Dorsolateral prefrontal cortex (tissue), 120 donors: ENCODE measurements at regions of chr4 and their contacts with region 1.

Region 1: GRCh38 chr4:143482840-143483239 is 30.7 kb upstream of the SMARCA5 start:
- DNase-seq: peak in 2 of 10 donors; percentile 9 to 26
- H3K4me3 ChIP-seq: no peak overlapping the region
- H3K27ac ChIP-seq: peak overlapping the region in 47 of 59 donors; percentile 0 to 85 (median 64)
- H3K27me3 ChIP-seq: no peaks in the 10 kb centered on the region
- CTCF ChIP-seq: peak; percentile 61 to 94 (median 81)

Region 2: GRCh38 chr4:143195581-143195980 is 287.3 kb before region 1 on chr4:
- intact Hi-C with region 1: no loop called
- DNase-seq: no peak
- H3K4me3 ChIP-seq: no peak overlapping the region
- H3K27ac ChIP-seq: no peak overlapping the region
- H3K27me3 ChIP-seq: no peaks in the 10 kb centered on the region
- CTCF ChIP-seq: no peak

Region 3: GRCh38 chr4:143207557-143207956 is 275.3 kb before region 1 on chr4:
- intact Hi-C with region 1: loop called (anchors 2 kb)
- DNase-seq: no peak
- H3K4me3 ChIP-seq: peak overlapping the region in 3 of 59 donors; percentile 9 to 36 (median 12)
- H3K27ac ChIP-seq: peak overlapping the region in 5 of 59 donors; percentile 9 to 33 (median 13)
- H3K27me3 ChIP-seq: no peaks in the 10 kb centered on the region
- CTCF ChIP-seq: peak; percentile 12 to 75 (median 57)

Region 4: GRCh38 chr4:143375313-143376073 is 107.3 kb before region 1 on chr4:
- intact Hi-C with region 1: loop called (anchors 5 kb)
- DNase-seq: peak; percentile 11 to 86 (median 73)
- H3K4me3 ChIP-seq: peak overlapping the region in 24 of 59 donors; percentile 2 to 41 (median 23)
- H3K27ac ChIP-seq: peak overlapping the region in 58 of 59 donors; percentile 74 to 99 (median 92)
- H3K27me3 ChIP-seq: no peaks in the 10 kb centered on the region
- CTCF ChIP-seq: peak; percentile 15 to 79 (median 63)

Region 5: DNA sequence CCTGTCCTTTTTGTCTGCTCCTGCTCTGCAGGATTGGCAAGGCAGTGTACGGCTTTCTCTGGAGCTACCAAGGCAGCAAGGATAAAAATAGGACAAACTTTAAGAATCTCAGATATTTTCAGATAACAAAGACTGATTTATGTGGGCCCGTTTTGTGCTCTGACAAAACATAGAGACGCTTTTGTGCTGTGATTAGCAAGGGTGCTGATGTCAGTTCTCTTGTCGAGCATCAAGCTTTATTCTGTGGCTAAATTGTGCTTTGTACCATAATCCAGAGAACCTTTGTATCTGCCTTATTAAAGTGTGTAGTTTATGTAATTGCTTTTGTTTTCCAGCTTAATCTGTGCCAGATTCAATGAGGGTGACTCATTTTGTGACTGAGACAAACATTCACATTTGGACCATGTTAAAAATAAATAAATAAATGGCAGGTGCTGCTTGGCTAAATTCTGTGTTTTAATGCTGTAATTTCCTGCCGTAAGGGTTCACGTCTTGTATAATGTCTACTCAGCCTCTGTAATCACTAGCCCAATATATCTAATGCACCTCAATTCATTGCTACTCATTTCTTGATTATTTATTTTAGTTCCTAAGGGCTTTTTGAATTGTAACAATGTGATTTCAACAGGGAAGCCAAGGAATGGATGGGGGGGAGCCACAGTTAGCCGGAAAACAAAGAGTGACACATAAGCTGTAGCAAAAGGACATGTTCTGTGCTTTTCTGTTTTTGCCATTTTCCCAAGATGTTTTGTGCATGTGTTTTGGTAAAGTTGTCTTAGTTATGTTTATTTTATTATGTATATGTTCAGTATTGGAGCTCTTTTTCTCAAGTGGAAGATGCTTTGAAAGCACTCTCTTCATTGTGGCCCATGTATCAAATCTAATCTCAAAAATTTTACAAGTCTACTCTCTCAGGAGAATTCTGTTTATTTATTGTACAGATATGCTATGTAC is 71.0 kb before region 1 on chr4:
- intact Hi-C with region 1: loop called in 1 of 2 experiments (anchors 5 kb)
- DNase-seq: peak in 5 of 10 donors; percentile 19 to 71 (median 37)
- H3K4me3 ChIP-seq: peak overlapping the region in 38 of 59 donors; percentile 2 to 44 (median 18)
- H3K27ac ChIP-seq: peak overlapping the region; percentile 63 to 99 (median 97)
- H3K27me3 ChIP-seq: no peaks in the 10 kb centered on the region
- CTCF ChIP-seq: peak in 6 of 56 donors; percentile 0 to 16 (median 6)

Region 6: GRCh38 chr4:143679434-143679833 is 196.6 kb after region 1 on chr4:
- intact Hi-C with region 1: no loop called
- DNase-seq: no peak
- H3K4me3 ChIP-seq: no peak overlapping the region
- H3K27ac ChIP-seq: no peak overlapping the region
- H3K27me3 ChIP-seq: no peaks in the 10 kb centered on the region
- CTCF ChIP-seq: no peak

Region 7: GRCh38 chr4:143819029-143819428 is 336.2 kb after region 1 on chr4:
- intact Hi-C with region 1: no loop called
- DNase-seq: no peak
- H3K4me3 ChIP-seq: no peak overlapping the region
- H3K27ac ChIP-seq: no peak overlapping the region
- H3K27me3 ChIP-seq: no peaks in the 10 kb centered on the region
- CTCF ChIP-seq: no peak